Transverse colon (tissue), 4 donors: ENCODE measurements at regions of chrX and their contacts with region 1.

Region 1: DNA sequence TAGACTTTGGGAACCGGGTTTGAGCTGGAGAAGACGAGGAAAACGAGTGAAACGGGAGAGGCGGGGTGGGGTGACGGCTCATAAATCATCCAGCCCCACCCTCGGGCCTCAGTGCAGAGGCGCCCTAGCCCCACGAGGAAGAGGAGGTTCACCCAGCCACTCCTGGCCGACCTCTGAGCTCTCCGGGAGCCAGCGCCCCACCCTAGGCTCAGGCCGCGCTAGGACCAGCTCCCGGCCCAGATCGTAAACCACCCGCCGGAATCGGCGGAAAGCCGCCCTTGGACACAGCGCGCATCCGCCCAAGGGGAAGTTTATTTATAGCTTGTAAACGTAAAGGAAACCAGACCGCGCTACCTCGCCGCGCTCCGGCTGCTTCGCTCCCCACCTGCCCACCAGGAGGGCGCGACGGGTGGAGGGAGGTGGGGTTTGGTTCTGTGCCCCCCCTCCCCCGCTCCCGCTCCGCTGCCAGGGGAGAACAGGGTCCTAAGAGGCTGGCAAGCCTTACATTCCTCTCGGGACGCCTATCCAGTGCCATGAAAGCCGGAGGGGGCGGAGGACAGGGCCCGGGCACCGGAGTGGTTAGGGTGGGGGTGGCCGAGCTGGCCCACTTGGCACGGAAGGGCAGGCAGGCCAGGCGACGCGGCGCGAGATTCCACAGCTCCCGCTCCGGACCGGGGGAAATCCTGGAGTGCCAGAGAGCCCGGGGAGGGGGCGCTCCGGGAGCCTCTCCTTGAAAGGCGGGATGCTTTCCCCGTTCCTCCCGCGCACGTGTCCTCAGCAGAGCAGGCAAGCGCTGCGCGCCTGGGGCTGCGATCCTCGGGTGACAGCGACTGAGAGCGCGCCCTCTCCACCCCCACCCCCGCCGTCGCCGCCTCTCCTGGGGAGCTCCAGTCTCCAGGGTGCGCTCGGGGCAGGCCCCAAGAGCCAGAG is 84.2 kb downstream of the BCOR start:
- DNase-seq: peak; percentile 87
- H3K4me3 ChIP-seq: peak overlapping the region; percentile 30 to 68 (median 50)
- H3K27ac ChIP-seq: peak overlapping the region; percentile 88 to 97 (median 92)
- H3K4me1 ChIP-seq: peaks cover 0 to 35% (median 27%) of the 10 kb centered on the region in 4 donors
- H3K27me3 ChIP-seq: no peaks in the 10 kb centered on the region
- CTCF ChIP-seq: peak in 1 of 5 experiments; percentile 15
- EP300 ChIP-seq: peak; percentile 1
- POLR2A ChIP-seq: peak; percentile 85

Region 2: DNA sequence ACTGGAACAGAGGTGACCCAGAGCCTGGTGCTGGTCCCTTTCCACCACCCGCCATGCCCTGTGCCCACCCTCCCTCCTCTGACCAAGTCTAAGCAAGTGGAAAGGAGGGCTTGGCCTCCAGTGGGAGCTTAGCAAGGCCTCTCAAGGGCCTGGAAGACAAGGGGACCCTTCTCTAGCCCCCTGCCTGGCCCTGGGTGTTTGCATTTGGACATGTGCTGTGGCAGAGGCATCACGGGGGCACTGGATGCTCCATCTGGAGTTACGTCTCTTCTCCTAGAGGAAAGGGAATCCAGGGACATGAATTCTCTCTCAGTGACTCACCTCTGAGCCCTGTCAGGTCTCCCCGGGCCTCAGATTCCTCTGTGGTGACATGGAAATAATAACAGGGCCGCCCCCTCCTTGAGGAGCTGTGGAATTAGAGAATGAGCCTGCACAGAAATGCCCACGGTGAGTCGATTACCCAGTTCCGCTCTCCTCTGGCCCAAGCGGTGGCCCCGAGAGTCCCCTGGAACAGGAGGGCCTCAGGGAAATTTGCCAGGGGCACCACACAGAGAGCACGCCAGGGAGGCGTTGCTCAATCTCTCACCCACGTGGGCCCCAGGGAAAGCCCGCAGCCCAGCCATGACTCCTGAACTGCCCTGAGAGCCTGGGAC is 105.4 kb before region 1 on chrX:
- in situ Hi-C with region 1: no loop called
- intact Hi-C with region 1: loop called (anchors 1 kb)
- DNase-seq: peak; percentile 32
- H3K4me3 ChIP-seq: no peak overlapping the region
- H3K27ac ChIP-seq: peak overlapping the region in 2 of 4 donors; percentile 9 to 55
- H3K4me1 ChIP-seq: peaks cover 3 to 14% (median 11%) of the 10 kb centered on the region in 4 donors
- H3K27me3 ChIP-seq: no peaks in the 10 kb centered on the region
- CTCF ChIP-seq: no peak
- EP300 ChIP-seq: no peak
- POLR2A ChIP-seq: no peak

Region 3: GRCh38 chrX:40097497-40098263 is 84.1 kb after region 1 on chrX and contains the start of gene BCOR:
- in situ Hi-C with region 1: no loop called
- intact Hi-C with region 1: loop called (anchors 5 kb)
- DNase-seq: peak; percentile 84
- H3K4me3 ChIP-seq: peak within 1 kb of the TSS; percentile 40 to 87 (median 77)
- H3K27ac ChIP-seq: peak within 1 kb of the TSS; percentile 91 to 95 (median 94)
- H3K4me1 ChIP-seq: peaks cover 2 to 25% (median 22%) of the 10 kb centered on the region in 4 donors
- H3K27me3 ChIP-seq: no peaks in the 10 kb centered on the region
- CTCF ChIP-seq: no peak
- EP300 ChIP-seq: no peak
- POLR2A ChIP-seq: peak; percentile 58
- total RNA-seq, gene BCOR: 17.9 to 27.8 (median 20.4) TPM